Heart left ventricle (tissue), 16 donors: ENCODE measurements at regions of chr6 and their contacts with region 1.

Region 1: GRCh38 chr6:33579828-33580714 is at the start of gene BAK1:
- DNase-seq: peak; percentile 93 to 95 (median 94)
- ATAC-seq: peak; percentile 95 to 96 (median 96)
- H3K4me3 ChIP-seq: peak within 1 kb of the TSS; percentile 50 to 97 (median 78)
- H3K27ac ChIP-seq: peak within 1 kb of the TSS; percentile 78 to 91 (median 86)
- H3K4me1 ChIP-seq: peaks cover 0 to 40% (median 30%) of the 10 kb centered on the region in 12 donors
- H3K27me3 ChIP-seq: no peaks in the 10 kb centered on the region
- CTCF ChIP-seq: peak; percentile 20 to 79 (median 56)
- POLR2A ChIP-seq: peak in 1 of 2 donors; percentile 82
- total RNA-seq, gene BAK1: 13.9 to 33.4 (median 18.9) TPM

Region 2: DNA sequence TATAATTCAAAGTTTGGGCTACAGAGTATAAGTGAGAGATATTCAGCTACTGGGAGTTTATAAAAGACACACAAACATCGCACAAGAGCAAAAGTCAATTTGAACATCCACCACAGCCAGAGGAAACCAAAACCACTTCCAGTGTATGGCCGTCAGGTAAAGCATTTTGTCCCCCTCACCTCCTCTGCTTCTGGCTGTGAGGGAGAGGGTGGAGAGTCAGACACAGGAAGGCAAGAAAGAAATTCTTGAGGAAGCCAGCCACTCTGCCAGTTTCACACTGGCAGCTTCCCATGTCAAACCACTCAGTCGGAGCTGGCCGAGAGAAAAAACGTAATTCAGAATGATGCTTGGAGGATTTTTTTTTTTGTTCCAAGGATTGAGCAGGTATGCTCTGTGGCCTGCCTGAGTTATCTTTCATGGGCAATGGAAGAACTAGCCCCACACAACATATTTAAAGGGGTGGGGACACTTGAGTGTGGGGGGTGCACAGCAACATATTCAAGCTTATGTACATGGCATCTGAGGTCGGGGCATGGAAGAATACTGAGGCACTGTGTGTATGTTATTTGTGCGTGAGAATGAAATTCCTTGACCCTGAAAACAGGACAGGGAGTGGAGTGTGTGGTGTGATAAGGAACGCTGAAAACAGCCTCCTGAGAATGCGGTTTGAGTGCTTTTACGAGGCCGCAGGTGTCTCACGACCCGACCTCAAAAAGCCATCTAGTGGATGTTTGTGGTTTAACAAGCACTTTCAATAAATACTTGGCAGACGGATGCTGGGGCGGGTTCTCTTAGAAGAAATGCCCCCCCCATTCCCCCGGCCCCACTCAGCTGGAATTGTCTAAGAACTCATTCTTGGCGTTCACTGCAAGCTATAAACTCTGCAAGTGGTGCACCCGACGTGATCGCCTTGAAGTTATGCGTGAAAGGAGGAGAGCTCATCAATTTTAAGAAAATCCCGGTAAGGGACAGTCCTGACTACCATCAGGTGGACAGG is 235.1 kb before region 1 on chr6:
- intact Hi-C with region 1: no loop called
- DNase-seq: peak in 3 of 5 donors; percentile 57 to 75 (median 66)
- ATAC-seq: peak in 3 of 4 donors; percentile 49 to 51 (median 49)
- H3K4me3 ChIP-seq: peak overlapping the region in 3 of 12 donors; percentile 4 to 18 (median 6)
- H3K27ac ChIP-seq: peak overlapping the region in 1 of 12 donors; percentile 66
- H3K4me1 ChIP-seq: peaks cover 0 to 10% (median 2%) of the 10 kb centered on the region in 12 donors
- H3K27me3 ChIP-seq: no peaks in the 10 kb centered on the region
- CTCF ChIP-seq: peak; percentile 42 to 69 (median 60)
- POLR2A ChIP-seq: no peak

Region 3: DNA sequence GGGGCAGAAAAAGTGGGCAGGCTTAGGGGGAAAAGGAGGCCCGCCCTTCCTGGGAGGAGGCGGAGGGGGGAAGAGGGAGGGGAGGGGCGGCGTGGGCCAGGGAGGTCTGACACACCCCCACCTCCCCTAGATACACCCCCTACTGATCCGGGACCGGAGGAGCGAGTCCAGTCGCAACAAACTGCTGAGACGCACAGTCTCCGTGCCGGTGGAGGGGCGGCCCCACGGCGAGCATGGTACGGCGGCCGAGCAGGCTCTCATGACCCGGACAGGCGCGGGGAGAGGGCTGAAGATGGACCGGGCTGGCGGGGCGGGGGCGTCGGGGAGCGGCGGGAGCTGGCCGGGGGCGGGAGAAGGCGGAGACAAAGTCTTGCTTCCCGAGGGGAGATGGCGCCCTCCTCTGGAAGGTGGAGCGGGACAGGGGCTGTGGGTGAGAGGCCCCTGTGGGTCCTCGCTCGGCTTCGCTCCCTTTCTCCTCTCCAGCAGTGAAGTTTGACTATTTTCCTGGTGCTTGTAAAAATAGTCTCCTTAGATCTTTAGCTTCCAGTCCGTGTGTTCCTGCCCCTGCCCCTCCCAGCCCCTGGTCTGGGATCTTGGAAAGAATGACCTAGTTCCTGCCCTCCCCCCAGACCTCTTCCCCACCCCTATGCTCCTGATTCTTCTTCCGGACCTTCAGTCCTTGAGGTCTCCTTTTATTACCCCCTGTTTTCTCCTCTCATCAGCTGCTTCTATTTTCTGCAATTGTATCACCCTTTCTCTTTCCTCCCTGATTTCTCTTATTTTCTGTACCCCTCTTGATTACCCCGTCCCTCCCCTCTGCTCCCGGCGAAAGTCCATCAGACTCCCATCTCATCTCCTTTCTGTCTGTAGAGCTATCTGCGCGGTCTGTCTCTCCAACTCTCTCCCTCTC is 154.1 kb before region 1 on chr6:
- intact Hi-C with region 1: loop called in 2 of 10 experiments (anchors 10 kb)
- DNase-seq: peak; percentile 90 to 92 (median 90)
- ATAC-seq: peak; percentile 73 to 85 (median 82)
- H3K4me3 ChIP-seq: peak overlapping the region; percentile 40 to 76 (median 68)
- H3K27ac ChIP-seq: peak overlapping the region; percentile 82 to 98 (median 94)
- H3K4me1 ChIP-seq: peaks cover 0 to 60% (median 46%) of the 10 kb centered on the region in 12 donors
- H3K27me3 ChIP-seq: no peaks in the 10 kb centered on the region
- CTCF ChIP-seq: peak; percentile 29 to 76 (median 60)
- POLR2A ChIP-seq: no peak

Region 4: DNA sequence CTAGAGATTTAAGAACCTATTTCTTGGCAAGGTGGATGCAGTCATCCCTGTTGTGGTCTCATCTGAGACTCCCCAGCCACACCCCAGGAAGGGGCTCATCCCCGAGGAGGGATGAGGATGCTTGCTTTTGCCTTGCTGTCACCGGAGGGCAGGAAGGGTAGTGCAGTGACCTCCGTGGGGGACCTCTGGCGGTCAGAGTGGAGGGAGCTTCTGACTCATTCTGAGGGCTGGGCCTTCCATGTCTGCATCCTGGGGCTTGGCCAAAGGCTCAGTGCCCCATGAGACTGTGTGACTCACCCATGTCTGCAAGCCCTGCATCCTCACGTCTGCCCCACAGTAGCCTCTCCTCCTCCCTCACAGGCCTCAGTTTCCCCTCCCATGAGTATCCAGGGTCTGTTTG is 92.7 kb after region 1 on chr6:
- intact Hi-C with region 1: loop called in 3 of 10 experiments (anchors 2 to 10 kb)
- DNase-seq: peak; percentile 80 to 95 (median 89)
- ATAC-seq: peak; percentile 93 to 98 (median 96)
- H3K4me3 ChIP-seq: no peak overlapping the region
- H3K27ac ChIP-seq: no peak overlapping the region
- H3K4me1 ChIP-seq: peaks cover 0 to 13% (median 6%) of the 10 kb centered on the region in 12 donors
- H3K27me3 ChIP-seq: no peaks in the 10 kb centered on the region
- CTCF ChIP-seq: peak; percentile 20 to 73 (median 59)
- POLR2A ChIP-seq: no peak

Region 5: GRCh38 chr6:34027445-34027936 is 447.4 kb after region 1 on chr6:
- intact Hi-C with region 1: loop called in 2 of 10 experiments (anchors 10 kb)
- DNase-seq: peak; percentile 24 to 75 (median 39)
- ATAC-seq: peak in 3 of 4 donors; percentile 44 to 76 (median 61)
- H3K4me3 ChIP-seq: no peak overlapping the region
- H3K27ac ChIP-seq: no peak overlapping the region
- H3K4me1 ChIP-seq: no peaks in the 10 kb centered on the region
- H3K27me3 ChIP-seq: peaks cover 0 to 49% (median 6%) of the 10 kb centered on the region in 9 donors
- CTCF ChIP-seq: peak; percentile 57 to 87 (median 72)
- POLR2A ChIP-seq: no peak